Activated T-helper 1 cell treated with anti-CD3 and anti-CD28 coated beads, Interleukin-12 subunit alpha, Interleukin-12 subunit beta, Interleukin-2, Interleukin-4 antibody, amounts not matched to agents 30 ng/mL and 10 ng/mL and 1 ng/mL, durations not matched to agents 14 hours and 24 hours and 36 hours (primary cell): ENCODE measurements at regions of chr10 and their contacts with region 1.

Region 1: DNA sequence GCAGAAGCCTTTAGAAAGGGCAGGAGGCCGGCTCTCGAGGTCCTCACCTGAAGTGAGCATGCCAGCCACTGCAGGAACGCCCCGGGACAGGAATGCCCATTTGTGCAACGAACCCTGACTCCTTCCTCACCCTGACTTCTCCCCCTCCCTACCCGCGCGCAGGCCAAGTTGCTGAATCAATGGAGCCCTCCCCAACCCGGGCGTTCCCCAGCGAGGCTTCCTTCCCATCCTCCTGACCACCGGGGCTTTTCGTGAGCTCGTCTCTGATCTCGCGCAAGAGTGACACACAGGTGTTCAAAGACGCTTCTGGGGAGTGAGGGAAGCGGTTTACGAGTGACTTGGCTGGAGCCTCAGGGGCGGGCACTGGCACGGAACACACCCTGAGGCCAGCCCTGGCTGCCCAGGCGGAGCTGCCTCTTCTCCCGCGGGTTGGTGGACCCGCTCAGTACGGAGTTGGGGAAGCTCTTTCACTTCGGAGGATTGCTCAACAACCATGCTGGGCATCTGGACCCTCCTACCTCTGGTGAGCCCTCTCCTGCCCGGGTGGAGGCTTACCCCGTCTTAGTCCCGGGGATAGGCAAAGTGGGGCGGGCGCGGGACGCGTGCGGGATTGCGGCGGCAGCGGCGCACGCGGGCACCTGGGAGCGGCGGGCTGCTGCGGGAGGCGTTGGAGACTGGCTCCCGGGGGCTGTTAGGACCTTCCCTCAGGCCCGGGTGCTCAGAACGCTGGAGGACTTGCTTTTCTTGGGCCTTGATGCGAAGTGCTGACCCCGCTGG is at the start of gene FAS:
- DNase-seq: peak; percentile 81
- H3K4me3 Mint-ChIP-seq: peak within 1 kb of the TSS; percentile 97
- H3K27ac Mint-ChIP-seq: peak within 1 kb of the TSS; percentile 97
- H3K4me1 Mint-ChIP-seq: peaks cover 75% of the 10 kb centered on the region
- H3K27me3 Mint-ChIP-seq: no peaks in the 10 kb centered on the region
- total RNA-seq, gene FAS: 36.4 and 38.6 TPM in 2 replicates

Region 2: DNA sequence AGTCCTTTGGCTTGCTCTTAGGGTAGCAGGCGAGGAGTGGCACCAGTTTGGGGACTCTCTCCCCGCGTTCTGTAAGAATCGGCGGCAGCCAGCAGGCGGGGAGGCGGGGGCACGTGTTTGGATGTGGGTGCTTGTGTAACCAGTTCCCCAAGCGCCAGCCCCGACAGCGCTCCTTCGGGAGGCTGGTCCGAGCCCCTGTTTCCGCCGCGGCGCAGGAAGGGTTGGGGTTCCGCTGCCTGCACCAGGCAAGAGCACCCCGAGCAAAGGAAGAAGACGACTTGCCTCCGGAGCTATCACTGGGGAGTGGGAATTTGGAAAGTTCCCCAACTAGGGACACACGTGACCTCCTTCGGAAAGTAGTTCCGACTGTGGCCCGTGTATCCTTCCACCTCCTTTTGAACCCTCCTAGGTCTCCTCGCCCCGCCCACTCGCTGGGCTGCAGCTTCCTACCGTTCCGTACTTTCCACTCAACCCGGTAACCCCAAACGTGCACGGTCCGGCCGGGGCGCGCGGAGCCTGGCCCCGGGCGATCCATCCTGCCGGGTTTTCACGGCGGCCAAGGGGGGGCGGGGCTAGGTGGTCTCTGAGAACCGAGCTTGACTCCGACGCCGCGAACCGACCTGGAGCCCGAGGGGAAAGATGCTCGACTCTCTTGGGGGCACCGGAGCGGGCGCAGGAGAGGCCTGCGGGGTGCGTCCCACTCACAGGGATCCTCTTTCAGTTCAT is 1128.5 kb before region 1 on chr10:
- intact Hi-C with region 1: loop called (anchors 2 kb)
- DNase-seq: peak; percentile 91
- H3K4me3 Mint-ChIP-seq: peak overlapping the region; percentile 94
- H3K27ac Mint-ChIP-seq: peak overlapping the region; percentile 92
- H3K4me1 Mint-ChIP-seq: peaks cover 52% of the 10 kb centered on the region
- H3K27me3 Mint-ChIP-seq: peaks cover 5% of the 10 kb centered on the region

Region 3: DNA sequence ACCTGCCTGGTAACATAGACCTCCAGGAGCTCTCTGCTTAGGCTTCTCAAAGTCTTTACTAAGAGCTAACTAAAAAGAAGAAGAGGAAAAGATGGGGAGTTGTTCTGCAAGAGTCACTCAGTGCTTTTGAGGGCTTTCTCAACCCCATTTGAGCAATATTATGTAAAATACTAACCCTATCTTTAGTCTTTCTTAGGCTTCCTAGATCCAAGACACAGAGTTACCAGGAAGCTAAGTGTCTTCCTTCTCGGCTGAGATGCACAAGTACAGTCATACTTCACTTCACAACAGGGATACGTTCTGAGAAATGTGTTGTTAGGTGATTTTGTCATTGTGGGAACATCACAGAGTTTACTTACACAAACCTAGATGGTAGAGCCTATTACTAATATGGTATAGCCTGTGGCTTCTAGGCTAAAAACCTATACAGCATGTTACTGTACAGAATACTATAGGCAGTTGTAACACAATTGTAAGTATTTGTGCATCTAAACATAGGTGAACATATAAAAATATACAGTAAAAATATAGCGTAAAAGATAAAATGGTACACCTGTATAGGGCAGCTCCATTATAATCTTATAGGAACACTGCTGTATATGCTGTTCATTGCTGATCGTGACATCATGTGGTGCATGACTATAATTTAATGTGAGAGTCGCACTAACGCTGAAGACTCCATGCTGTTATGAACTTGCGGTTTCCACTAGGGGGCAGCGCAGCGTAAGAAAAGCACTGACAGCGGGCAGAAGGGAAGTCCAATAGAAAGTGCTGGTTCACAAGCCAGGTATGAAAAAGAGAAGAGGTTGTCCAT is 155.3 kb before region 1 on chr10:
- intact Hi-C with region 1: loop called (anchors 2 kb)
- DNase-seq: peak; percentile 81
- H3K4me3 Mint-ChIP-seq: no peak overlapping the region
- H3K27ac Mint-ChIP-seq: no peak overlapping the region
- H3K4me1 Mint-ChIP-seq: peaks cover 33% of the 10 kb centered on the region
- H3K27me3 Mint-ChIP-seq: no peaks in the 10 kb centered on the region

Region 4: DNA sequence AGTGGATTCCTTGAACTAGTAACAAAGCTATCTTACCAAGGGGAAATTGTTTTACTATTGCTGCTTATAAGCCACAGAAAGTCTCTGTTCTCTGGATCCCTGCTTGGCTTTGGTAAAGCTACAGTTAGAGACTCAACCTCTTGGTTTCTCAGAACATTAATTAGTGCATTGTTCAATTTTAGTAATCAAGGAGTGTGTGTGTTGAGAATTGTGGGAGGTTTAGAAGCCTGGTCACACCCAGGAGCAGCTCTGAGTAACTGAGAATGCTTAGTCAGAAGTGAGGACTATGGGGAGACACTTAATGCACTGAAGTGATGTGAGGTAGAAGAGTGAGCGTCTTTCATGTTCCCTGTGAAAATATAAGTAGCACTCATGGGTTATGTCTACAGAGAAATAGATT is 29.8 kb before region 1 on chr10:
- intact Hi-C with region 1: loop called (anchors 2 kb)
- DNase-seq: no peak
- H3K4me3 Mint-ChIP-seq: no peak overlapping the region
- H3K27ac Mint-ChIP-seq: no peak overlapping the region
- H3K4me1 Mint-ChIP-seq: peaks cover 24% of the 10 kb centered on the region
- H3K27me3 Mint-ChIP-seq: peaks cover 13% of the 10 kb centered on the region

Region 5: GRCh38 chr10:89029785-89030437 is 39.3 kb after region 1 on chr10:
- intact Hi-C with region 1: loop called (anchors 1 kb)
- DNase-seq: peak; percentile 50
- H3K4me3 Mint-ChIP-seq: no peak overlapping the region
- H3K27ac Mint-ChIP-seq: no peak overlapping the region
- H3K4me1 Mint-ChIP-seq: peaks cover 31% of the 10 kb centered on the region
- H3K27me3 Mint-ChIP-seq: peaks cover 2% of the 10 kb centered on the region

Region 6: GRCh38 chr10:89414146-89414878 is 423.7 kb after region 1 on chr10 and contains the start of gene IFIT5:
- intact Hi-C with region 1: loop called (anchors 5 kb)
- DNase-seq: peak; percentile 65
- H3K4me3 Mint-ChIP-seq: peak within 1 kb of the TSS; percentile 92
- H3K27ac Mint-ChIP-seq: peak within 1 kb of the TSS; percentile 97
- H3K4me1 Mint-ChIP-seq: peaks cover 72% of the 10 kb centered on the region
- H3K27me3 Mint-ChIP-seq: no peaks in the 10 kb centered on the region
- total RNA-seq, gene IFIT5: 8.7 TPM in 2 replicates

Region 7: GRCh38 chr10:89805599-89806013 is 815.0 kb after region 1 on chr10:
- intact Hi-C with region 1: loop called (anchors 10 kb)
- DNase-seq: no peak
- H3K4me3 Mint-ChIP-seq: no peak overlapping the region
- H3K27ac Mint-ChIP-seq: peak overlapping the region; percentile 42
- H3K4me1 Mint-ChIP-seq: peaks cover 31% of the 10 kb centered on the region
- H3K27me3 Mint-ChIP-seq: peaks cover 29% of the 10 kb centered on the region